Activated T-helper 2 cell treated with anti-CD3 and anti-CD28 coated beads, Interferon-gamma antibody, Interleukin-2, Interleukin-4, amounts not matched to agents 10 μg/mL and 5 μg/mL and 100 μg/mL, durations not matched to agents 14 hours and 24 hours and 36 hours (primary cell): ENCODE measurements at regions of chr4 and their contacts with region 1.

Region 1: DNA sequence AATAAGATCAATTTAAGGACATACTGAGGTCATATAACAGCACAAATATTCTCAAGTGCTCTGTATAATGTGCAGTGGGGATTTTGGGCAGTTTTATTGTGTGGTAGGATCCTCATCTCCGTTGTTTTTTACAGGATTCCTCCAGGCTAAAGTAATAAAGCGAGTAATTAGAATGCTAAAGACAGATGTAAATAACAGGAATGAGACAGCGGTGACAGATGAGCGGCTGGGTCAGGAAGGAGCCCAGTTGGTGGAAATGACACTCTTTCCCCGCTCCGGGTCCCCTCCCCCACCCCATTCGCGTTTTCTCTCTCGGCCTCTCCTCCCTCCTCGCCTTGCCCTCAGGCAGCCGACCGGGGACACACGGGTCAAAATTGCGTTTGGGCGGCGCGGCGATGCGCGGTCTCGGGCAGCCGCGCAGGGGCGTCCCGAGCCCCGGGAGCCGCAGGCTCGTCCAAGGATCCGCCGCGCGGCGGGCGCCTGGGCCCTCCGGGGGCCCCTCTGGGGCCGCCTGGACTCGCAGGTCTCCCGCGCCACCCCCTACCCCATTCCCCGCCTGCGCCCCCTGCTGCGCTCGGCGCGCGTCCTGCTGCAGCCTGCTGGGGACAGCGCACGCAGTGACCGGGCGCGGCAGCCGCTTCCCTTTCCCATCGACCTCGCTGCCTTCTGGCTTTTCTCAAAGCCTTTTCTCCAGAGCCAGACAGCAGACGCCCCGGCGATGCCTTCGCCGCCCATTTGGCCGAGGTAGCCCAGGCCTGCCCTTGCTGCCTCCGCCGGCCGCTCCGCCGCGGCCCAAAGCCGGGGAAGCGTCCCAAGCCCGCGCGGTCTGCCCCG is 16.2 kb downstream of the POU4F2 start:
- DNase-seq: no peak
- H3K4me3 Mint-ChIP-seq: no peak overlapping the region
- H3K27ac Mint-ChIP-seq: no peak overlapping the region
- H3K4me1 Mint-ChIP-seq: peaks cover 5% of the 10 kb centered on the region
- H3K27me3 Mint-ChIP-seq: peaks cover 64% of the 10 kb centered on the region

Region 2: DNA sequence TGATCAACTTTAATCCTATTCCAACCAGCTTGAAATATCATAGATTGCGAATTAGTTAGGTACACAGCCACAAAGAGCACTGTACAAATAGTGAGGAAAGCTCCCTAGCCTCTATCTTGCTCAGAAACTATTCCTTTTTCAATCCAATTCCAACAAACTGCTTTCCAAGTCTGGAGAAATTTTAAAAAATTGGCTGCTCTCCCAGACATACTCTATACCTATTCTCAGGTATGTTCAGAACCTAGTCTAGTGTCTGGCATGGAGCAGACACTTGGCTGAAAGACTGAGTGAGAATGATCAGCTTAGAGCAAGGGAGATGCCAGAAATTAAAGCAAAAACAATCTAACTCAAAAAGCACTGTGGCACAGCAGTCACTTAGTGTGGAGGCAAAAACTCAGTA is 239.1 kb before region 1 on chr4:
- intact Hi-C with region 1: no loop called
- DNase-seq: no peak
- H3K4me3 Mint-ChIP-seq: no peak overlapping the region
- H3K27ac Mint-ChIP-seq: no peak overlapping the region
- H3K4me1 Mint-ChIP-seq: no peaks in the 10 kb centered on the region
- H3K27me3 Mint-ChIP-seq: no peaks in the 10 kb centered on the region

Region 3: GRCh38 chr4:146525754-146526153 is 129.2 kb before region 1 on chr4:
- intact Hi-C with region 1: no loop called
- DNase-seq: no peak
- H3K4me3 Mint-ChIP-seq: no peak overlapping the region
- H3K27ac Mint-ChIP-seq: no peak overlapping the region
- H3K4me1 Mint-ChIP-seq: peaks cover 17% of the 10 kb centered on the region
- H3K27me3 Mint-ChIP-seq: no peaks in the 10 kb centered on the region

Region 4: DNA sequence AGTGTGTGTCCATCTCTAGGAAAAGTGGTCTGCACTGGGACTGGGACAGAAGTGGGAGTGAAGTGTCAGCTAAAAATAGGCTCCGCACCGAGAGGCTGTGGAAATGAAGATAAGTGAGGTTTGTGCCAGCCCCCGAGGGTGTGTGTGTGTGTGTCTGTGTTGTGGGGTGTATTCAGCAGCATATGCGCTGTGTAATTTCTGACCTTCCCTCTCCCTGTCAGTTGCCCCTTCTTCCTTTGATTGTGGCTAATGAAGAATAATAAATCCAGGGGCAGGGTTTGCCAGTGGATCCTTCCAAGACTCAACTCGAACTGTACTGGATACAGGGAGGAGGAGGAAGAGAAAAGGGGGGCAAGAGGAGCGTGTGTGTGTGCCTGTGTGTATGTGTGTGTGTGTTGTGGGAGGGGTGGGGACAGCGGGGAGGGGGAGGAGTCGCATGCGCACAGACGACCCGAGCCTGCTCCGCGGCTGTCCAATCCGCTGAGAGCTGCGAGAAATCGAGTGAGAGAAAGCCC is 17.2 kb before region 1 on chr4:
- intact Hi-C with region 1: loop called (anchors 2 kb)
- DNase-seq: no peak
- H3K4me3 Mint-ChIP-seq: no peak overlapping the region
- H3K27ac Mint-ChIP-seq: no peak overlapping the region
- H3K4me1 Mint-ChIP-seq: no peaks in the 10 kb centered on the region
- H3K27me3 Mint-ChIP-seq: peaks cover 86% of the 10 kb centered on the region